Ascending aorta (tissue), 2 donors: ENCODE measurements at regions of chr1 and their contacts with region 1.

Region 1: DNA sequence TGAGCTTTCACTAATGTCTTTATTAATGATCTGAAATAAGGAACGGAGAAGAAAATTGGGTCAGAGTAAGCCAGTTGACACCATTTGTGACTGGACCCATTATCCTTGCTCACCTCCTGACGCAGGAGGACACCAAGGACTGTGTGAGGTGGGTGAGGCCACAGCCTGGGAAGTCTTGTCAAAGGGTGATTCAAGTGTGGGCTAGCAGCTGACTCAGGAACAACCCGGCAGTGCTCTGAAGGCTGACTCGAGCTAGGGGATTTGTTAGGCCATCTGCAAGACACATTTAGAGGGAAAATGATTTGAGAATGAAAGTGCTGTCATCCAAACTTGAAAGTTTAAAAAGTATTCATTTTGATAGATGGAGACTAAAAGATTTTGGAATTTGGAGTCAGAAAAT is 21.2 kb downstream of the PRRX1 start:
- DNase-seq: no peak
- H3K4me3 ChIP-seq: no peak overlapping the region
- H3K27ac ChIP-seq: no peak overlapping the region
- H3K4me1 ChIP-seq: peaks cover 0 to 14% of the 10 kb centered on the region in 2 donors
- H3K27me3 ChIP-seq: no peaks in the 10 kb centered on the region
- CTCF ChIP-seq: no peak

Region 2: DNA sequence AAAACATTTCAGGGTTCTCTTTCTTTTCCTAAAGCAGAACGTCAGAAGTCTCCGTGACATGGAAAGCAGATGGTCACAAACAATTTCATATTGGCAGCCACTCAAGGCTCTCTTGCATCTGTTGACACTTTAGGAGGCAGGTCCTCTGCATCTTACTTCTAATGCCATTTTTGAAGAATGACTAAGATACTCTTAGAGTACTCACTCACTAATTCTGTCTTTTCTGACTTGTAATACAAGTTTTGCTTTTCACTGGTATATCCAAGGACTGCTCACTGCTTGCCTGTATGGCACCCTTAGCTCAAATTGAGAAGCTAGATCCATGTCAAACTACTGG is 47.1 kb after region 1 on chr1:
- intact Hi-C with region 1: loop called (anchors 10 kb)
- DNase-seq: no peak
- H3K4me3 ChIP-seq: no peak overlapping the region
- H3K27ac ChIP-seq: peak overlapping the region; percentile 12 to 17
- H3K4me1 ChIP-seq: peaks cover 4 to 8% of the 10 kb centered on the region in 2 donors
- H3K27me3 ChIP-seq: no peaks in the 10 kb centered on the region
- CTCF ChIP-seq: no peak

Region 3: DNA sequence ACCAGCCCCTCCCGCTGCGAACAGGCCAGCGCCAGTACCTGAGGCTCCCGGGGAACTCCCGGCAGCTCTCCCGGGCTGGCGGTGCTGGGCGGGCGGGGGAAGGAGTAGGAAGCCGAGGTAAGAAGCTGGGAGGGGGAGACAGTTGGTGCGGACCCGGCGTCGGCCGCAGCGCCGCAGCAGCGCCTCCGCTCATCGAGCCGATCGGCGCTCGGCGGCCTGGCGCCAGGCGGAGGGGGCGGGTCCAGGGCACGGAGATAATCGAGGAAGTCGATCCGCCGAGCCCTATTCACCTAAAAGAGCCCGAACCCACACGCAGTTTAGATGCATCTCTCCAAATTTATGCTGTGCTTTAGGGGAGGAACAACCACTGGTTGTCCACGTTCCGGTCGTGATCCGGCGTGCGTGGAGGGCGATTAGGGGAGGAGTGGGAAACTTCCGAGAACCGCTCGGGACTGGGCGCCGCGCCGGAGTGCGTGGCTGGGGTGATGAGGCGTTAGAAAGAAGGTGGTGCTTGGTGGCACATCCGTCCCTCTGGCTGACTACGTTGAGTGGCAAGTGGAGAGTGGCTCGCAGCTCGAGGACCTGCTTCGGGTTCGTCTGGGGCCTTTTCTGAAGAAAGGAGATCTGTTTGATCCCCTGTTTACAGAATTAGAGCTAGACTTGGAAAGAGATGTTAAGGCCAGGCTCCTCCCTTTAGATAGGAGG is 1056.9 kb after region 1 on chr1 and contains the start of gene VAMP4:
- intact Hi-C with region 1: no loop called
- DNase-seq: peak; percentile 51 to 94
- H3K4me3 ChIP-seq: peak within 1 kb of the TSS; percentile 90 to 96
- H3K27ac ChIP-seq: peak within 1 kb of the TSS; percentile 95 to 97
- H3K4me1 ChIP-seq: peaks cover 9 to 41% of the 10 kb centered on the region in 2 donors
- H3K27me3 ChIP-seq: no peaks in the 10 kb centered on the region
- CTCF ChIP-seq: no peak
- total RNA-seq, gene VAMP4: 3.6 TPM